ENCODE measurements at regions of chr17 and their contacts with region 1.

Region 1: DNA sequence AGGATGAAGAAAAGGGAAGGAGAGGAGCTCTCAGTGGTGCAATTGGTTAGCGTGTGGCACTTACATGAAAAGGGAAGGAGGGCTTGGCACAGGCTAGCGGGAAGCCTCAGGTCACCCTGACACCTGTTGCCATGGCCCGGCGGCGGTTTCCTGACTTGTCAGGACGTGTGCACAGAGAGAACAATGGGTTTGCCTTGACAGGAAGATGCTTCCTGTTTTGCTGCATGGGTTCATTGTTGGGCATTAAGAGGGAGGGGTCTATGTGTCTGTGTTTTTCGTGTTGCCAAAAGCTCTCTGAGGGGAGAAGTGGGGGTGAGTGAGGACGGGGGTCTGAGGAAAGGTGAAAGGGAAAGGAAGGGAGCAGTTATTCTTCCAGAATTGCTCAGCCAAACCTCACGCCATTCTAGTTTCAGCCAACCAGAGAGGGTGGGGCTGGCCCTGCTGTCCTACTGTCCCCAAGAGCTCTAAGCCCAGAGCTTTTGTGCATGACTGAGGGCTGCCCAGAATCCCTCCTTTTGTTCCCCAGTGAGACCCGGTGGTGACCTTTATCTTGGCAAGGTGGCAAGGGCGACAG is 17.1 kb upstream of the CCR7 start:
- DNase-seq: peak; percentile 90
- H3K4me3 Mint-ChIP-seq: peak overlapping the region; percentile 62
- H3K27ac Mint-ChIP-seq: peak overlapping the region; percentile 89
- H3K4me1 Mint-ChIP-seq: peaks cover 72% of the 10 kb centered on the region
- H3K27me3 Mint-ChIP-seq: no peaks in the 10 kb centered on the region

Region 2: DNA sequence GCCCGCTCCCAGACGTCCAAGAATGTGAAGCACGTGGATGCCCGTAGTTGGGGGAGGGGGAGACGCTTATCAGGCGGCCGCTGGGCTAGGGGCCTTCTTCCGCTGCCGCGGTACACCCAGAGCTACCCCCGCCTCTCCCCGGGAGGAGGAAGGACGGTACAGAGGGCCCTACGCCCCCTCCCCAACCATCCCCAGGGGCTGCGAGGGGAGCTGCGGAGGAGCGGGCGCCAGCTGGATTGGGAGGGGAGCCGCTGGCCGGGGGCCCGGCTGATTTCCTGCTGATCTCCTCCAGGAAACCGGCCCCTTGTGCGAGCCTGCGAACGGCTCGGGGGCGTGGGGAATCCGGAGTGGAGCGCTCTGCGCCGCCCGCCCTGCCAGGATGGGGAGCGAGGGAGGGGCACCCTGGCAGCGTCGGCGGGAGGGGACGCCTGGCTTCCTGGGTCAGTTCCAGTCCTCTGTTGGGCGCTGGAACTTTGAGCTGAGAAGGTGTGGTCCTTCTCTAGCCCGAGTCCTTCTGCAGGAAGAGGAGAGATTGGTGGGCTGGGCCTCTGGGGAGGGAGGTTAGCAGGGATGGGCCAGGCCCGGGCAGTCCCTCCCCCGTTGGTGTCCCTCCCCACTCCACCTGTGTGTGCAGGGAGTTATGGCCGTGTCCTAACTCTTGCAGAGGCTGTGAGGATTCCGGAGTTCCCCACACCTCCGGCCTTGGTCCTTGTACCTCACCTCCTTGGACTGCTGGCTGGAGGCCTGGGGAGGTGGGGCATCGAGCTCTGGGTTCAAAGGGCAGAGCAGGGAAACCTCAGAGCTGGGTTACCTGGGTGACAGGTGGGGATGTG is 237.0 kb before region 1 on chr17:
- intact Hi-C with region 1: no loop called
- DNase-seq: peak; percentile 69
- H3K4me3 Mint-ChIP-seq: peak overlapping the region; percentile 65
- H3K27ac Mint-ChIP-seq: peak overlapping the region; percentile 58
- H3K4me1 Mint-ChIP-seq: peaks cover 42% of the 10 kb centered on the region
- H3K27me3 Mint-ChIP-seq: no peaks in the 10 kb centered on the region

Region 3: DNA sequence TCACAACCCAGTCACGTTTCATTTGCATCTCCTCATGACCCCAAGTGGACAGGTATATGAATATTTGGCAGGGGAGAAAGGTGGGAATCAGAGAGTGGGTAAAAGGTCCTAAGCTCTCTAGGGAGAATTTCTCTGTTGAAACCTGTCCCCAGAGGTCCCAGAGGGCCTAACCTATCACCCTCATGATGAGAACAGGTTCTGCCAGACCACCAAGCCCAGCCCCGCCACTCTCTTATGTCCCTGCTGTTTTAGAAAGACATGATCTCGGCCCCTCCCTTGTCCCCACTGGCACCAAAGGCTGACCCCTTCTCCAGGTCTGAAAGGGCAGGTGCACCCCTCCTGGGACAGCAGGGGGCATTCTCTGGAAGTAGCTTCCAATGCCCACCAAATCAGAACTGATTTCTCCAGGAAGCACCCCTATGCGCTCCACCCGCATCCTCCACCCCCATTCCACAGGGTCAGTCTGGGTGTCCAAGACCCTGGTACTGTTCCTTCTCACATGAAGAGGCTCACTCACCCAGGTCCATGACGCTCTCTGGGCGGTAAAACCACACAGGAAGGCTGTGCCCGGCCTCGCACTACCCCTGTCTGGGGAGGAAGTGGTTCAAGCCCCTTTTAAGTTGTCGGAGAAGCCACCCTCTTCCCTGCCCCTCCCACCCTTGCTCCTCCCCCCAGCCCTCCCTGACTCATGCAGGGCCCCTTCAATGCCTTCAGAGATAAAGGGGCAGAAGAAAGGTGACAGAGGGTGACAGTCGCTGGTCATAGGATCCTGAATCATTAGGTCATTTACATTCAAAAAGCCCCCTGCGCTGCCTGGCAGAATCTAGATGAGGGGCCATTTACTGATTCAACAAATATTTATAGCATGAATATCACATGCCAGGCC is 17.3 kb before region 1 on chr17 and contains the start of gene CCR7:
- intact Hi-C with region 1: loop called (anchors 1 kb)
- DNase-seq: peak; percentile 93
- H3K4me3 Mint-ChIP-seq: peak within 1 kb of the TSS; percentile 95
- H3K27ac Mint-ChIP-seq: peak within 1 kb of the TSS; percentile 100
- H3K4me1 Mint-ChIP-seq: peaks cover 37% of the 10 kb centered on the region
- H3K27me3 Mint-ChIP-seq: no peaks in the 10 kb centered on the region
- total RNA-seq, gene CCR7: 217 and 220 TPM in 2 replicates

Measured in activated CD4-positive, alpha-beta T cell treated with anti-CD3 and anti-CD28 coated beads, Interleukin-2, amount 10 ng/mL, durations not matched to agents 24 days and 14 days (primary cell).